ENCODE measurements at regions of chr5 and their contacts with region 1.

Region 1: GRCh38 chr5:149284501-149284900 is 12.8 kb downstream of the AFAP1L1 start:
- DNase-seq: no peak
- ATAC-seq: no peak
- H3K4me3 ChIP-seq: no peak overlapping the region
- H3K27ac ChIP-seq: no peak overlapping the region
- H3K4me1 ChIP-seq: no peaks in the 10 kb centered on the region
- H3K27me3 ChIP-seq: no peaks in the 10 kb centered on the region
- CTCF ChIP-seq: no peak

Region 2: DNA sequence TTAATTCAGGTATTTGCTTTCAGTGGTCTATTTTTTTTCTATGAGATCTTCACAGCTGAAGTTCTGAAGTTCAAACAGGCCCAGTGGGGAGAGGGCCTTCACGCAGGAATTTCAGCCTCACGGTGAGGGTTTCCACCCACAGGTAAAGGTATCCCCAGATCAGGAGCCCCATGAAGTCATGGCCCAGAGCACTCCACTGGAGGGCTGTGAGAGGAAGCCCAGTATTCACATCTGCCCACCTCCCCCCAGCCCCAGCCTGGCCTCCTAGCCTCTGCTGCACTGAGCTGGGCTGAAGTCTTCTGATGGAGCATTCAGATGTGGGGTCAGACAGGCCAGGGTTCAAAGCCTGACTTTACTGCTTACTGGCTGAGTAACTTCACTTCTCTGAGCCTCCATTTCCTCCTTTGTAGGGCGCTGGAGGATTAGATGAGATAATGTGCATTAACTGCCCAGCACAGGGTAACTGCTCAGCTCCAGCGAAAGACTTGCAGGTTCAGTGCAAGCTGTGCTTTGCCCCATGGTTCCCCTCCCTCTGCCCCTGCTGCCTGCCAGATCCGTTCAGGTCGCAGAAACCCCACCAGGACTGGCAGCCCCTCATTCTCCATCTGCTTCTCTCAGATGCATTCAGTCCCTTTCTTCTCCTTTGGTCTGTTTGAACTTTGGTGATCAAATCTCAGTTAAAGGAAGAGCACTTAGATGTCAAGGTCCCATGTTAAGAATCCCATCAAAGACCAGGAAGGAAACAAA is 10.2 kb after region 1 on chr5:
- CTCF ChIA-PET with region 1: no interaction called
- POLR2A ChIA-PET with region 1: no interaction called
- intact Hi-C with region 1: loop called (anchors 1 kb)
- DNase-seq: no peak
- ATAC-seq: no peak
- H3K4me3 ChIP-seq: no peak overlapping the region
- H3K27ac ChIP-seq: no peak overlapping the region
- H3K4me1 ChIP-seq: no peaks in the 10 kb centered on the region
- H3K27me3 ChIP-seq: no peaks in the 10 kb centered on the region
- CTCF ChIP-seq: no peak

Region 3: GRCh38 chr5:149310947-149311658 is 26.6 kb after region 1 on chr5:
- CTCF ChIA-PET with region 1: no interaction called
- POLR2A ChIA-PET with region 1: no interaction called
- intact Hi-C with region 1: no loop called
- DNase-seq: peak; percentile 33
- ATAC-seq: no peak
- H3K4me3 ChIP-seq: no peak overlapping the region
- H3K27ac ChIP-seq: no peak overlapping the region
- H3K4me1 ChIP-seq: no peaks in the 10 kb centered on the region
- H3K27me3 ChIP-seq: no peaks in the 10 kb centered on the region
- CTCF ChIP-seq: no peak

Measured in PC-3 (cell line).